ENCODE measurements at regions of chr11 and their contacts with region 1.

Region 1: GRCh38 chr11:46609386-46609785 is 7.6 kb downstream of the HARBI1 start:
- DNase-seq: no peak
- H3K4me3 ChIP-seq: no peak overlapping the region
- H3K27ac ChIP-seq: no peak overlapping the region
- H3K4me1 ChIP-seq: peaks cover 11% of the 10 kb centered on the region
- H3K27me3 ChIP-seq: no peaks in the 10 kb centered on the region
- CTCF ChIP-seq: no peak

Region 2: DNA sequence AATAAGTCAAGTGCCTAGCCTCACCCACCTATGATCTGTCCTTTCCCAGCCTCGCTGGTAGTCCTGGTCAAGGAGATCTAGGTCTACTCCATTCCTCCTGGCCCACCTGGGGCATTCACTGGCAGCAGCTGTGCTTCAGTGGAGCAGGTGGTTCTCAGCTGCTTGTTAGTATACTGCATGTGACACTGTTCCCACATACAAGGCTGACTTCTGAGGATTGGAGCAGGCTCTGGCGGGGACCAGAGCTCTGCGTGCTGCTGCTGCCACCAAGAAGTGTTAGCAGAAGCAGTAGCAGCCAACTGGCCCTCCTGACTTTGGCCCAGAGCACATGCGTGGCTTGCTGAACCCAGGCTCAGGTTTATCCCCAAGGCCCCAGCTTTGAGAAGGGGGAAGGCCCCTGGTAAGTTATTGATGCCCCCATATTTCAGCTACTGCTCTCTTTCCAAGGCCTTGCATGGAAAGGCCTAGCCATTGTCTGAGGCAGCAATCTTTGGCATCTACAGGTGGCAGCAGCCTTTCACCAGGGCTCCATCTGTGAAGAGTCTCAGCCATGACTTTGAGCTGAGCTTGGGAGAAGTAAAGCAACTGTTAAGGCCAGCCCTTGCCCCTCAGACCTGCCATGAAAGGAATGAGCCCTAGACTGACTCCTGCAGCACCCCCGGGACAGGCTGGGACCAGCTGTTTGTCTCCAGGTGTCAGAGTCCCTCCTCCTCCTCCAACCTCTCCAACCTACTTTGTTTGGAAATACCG is 64.5 kb after region 1 on chr11:
- CTCF ChIA-PET with region 1: no interaction called
- POLR2A ChIA-PET with region 1: interaction called, 22 read pairs
- intact Hi-C with region 1: no loop called
- DNase-seq: no peak
- H3K4me3 ChIP-seq: no peak overlapping the region
- H3K27ac ChIP-seq: peak overlapping the region; percentile 9
- H3K4me1 ChIP-seq: no peaks in the 10 kb centered on the region
- H3K27me3 ChIP-seq: no peaks in the 10 kb centered on the region
- CTCF ChIP-seq: no peak